ENCODE measurements at regions of chr1 and their contacts with region 1.

Region 1: GRCh38 chr1:115062542-115063011 is 26.7 kb downstream of the TSPAN2 start:
- DNase-seq: peak; percentile 95
- H3K4me3 Mint-ChIP-seq: no peak overlapping the region
- H3K27ac Mint-ChIP-seq: peak overlapping the region; percentile 80
- H3K4me1 Mint-ChIP-seq: peaks cover 43% of the 10 kb centered on the region
- H3K27me3 Mint-ChIP-seq: no peaks in the 10 kb centered on the region

Region 2: DNA sequence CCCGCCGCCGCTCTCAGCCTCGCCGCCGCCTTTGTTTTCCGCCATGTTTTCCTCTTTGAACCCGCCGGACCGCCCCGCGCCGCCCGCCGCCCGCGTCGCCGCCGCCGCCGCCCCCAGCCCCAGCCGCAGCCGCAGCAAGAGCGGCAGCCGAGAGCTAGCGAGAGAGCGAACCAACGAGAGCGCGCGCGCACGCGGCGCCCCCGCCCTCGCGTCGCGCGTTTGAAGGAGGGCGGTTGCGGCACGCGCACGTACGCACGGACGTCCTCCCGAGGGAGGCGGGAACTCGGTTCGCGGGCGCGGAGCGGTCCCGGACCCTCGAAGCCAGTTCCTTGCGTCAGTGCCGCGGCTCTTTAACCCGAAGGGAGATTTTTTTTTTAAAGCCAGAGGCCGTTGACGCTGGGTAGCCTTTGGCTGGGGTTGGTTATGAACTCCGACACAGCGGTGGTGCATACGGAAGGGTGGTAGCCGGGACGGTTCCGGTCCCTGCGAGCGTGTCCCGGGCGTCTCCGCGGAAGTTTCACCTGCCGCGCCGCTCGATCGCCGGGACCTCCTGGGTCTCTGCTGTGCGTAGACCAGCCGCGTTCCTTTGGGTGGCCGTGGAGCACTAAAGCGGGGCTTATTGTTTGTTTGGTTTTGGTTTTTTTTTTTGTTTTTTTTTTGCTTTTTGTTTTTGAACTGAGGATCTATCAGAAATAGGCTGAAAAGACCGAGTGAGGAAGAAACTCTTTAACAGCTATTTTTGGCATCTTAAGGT is 551.4 kb before region 1 on chr1 and contains the start of gene TRIM33:
- CTCF ChIA-PET with region 1: no interaction called
- POLR2A ChIA-PET with region 1: no interaction called
- intact Hi-C with region 1: loop called (anchors 1 kb)
- DNase-seq: peak; percentile 95
- H3K4me3 Mint-ChIP-seq: peak within 1 kb of the TSS; percentile 91
- H3K27ac Mint-ChIP-seq: peak within 1 kb of the TSS; percentile 98
- H3K4me1 Mint-ChIP-seq: peaks cover 41% of the 10 kb centered on the region
- H3K27me3 Mint-ChIP-seq: no peaks in the 10 kb centered on the region
- total RNA-seq, gene TRIM33: 26.9 to 27.9 TPM

Region 3: GRCh38 chr1:114670083-114671010 is 392.2 kb before region 1 on chr1:
- CTCF ChIA-PET with region 1: no interaction called
- POLR2A ChIA-PET with region 1: no interaction called
- intact Hi-C with region 1: loop called (anchors 5 kb)
- DNase-seq: peak; percentile 92
- H3K4me3 Mint-ChIP-seq: peak overlapping the region; percentile 88
- H3K27ac Mint-ChIP-seq: no peak overlapping the region
- H3K4me1 Mint-ChIP-seq: peaks cover 7% of the 10 kb centered on the region
- H3K27me3 Mint-ChIP-seq: peaks cover 2% of the 10 kb centered on the region

Region 4: GRCh38 chr1:115052454-115053083 is 10.0 kb before region 1 on chr1:
- CTCF ChIA-PET with region 1: interaction called, 10 read pairs
- POLR2A ChIA-PET with region 1: no interaction called
- intact Hi-C with region 1: no loop called
- DNase-seq: peak; percentile 67
- H3K4me3 Mint-ChIP-seq: no peak overlapping the region
- H3K27ac Mint-ChIP-seq: no peak overlapping the region
- H3K4me1 Mint-ChIP-seq: peaks cover 3% of the 10 kb centered on the region
- H3K27me3 Mint-ChIP-seq: no peaks in the 10 kb centered on the region

Region 5: DNA sequence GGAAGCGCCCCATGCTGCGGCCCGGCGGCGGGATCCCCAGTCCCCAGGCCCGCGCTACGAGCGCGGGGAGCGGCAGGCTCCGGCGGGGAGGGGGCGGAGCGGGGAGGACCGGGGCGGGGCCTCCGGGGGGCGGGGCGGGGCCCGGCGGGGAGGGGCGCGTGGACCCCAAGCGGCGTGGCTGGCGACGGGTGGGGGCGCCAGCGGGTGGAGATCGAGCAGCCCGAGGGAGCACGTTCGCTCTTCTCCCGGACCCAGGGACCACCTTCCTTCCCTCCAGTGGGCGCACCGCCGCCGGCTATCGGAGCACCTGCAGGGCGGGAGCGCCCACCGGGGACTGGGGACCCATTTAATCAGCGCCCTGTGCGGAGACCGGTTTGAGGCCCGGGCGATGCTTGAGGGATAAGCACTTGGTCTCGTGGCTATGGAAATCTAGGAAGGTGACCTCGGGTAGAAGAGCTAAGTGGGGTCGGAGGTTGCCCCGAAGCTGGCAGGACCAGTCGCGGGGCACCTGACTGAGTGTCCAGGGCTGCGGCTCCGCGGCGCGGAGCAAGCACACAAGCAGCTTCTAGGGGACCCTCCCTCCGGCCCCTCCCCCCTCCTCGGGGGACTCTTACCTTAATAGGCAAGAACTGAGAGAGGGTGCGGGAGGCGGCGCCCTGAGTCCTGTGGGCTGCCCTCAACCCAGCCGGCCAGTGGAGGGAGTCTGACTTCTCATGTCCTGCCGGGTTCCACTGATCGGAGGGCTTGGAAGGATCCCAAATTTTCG is 27.0 kb after region 1 on chr1 and contains the start of gene TSPAN2:
- CTCF ChIA-PET with region 1: no interaction called
- POLR2A ChIA-PET with region 1: no interaction called
- intact Hi-C with region 1: loop called (anchors 2 kb)
- DNase-seq: peak; percentile 56
- H3K4me3 Mint-ChIP-seq: peak within 1 kb of the TSS; percentile 78
- H3K27ac Mint-ChIP-seq: no peak within 1 kb of the TSS
- H3K4me1 Mint-ChIP-seq: peaks cover 43% of the 10 kb centered on the region
- H3K27me3 Mint-ChIP-seq: no peaks in the 10 kb centered on the region
- total RNA-seq, gene TSPAN2: 2.5 to 2.7 TPM

Region 6: GRCh38 chr1:115098979-115099692 is 36.6 kb after region 1 on chr1:
- CTCF ChIA-PET with region 1: interaction called, 5 read pairs
- POLR2A ChIA-PET with region 1: no interaction called
- intact Hi-C with region 1: loop called (anchors 1 kb)
- DNase-seq: peak; percentile 78
- H3K4me3 Mint-ChIP-seq: peak overlapping the region; percentile 80
- H3K27ac Mint-ChIP-seq: peak overlapping the region; percentile 85
- H3K4me1 Mint-ChIP-seq: peaks cover 47% of the 10 kb centered on the region
- H3K27me3 Mint-ChIP-seq: no peaks in the 10 kb centered on the region

Region 7: GRCh38 chr1:115648717-115649691 is 586.4 kb after region 1 on chr1:
- CTCF ChIA-PET with region 1: no interaction called
- POLR2A ChIA-PET with region 1: no interaction called
- intact Hi-C with region 1: loop called (anchors 5 kb)
- DNase-seq: peak; percentile 52
- H3K4me3 Mint-ChIP-seq: no peak overlapping the region
- H3K27ac Mint-ChIP-seq: no peak overlapping the region
- H3K4me1 Mint-ChIP-seq: no peaks in the 10 kb centered on the region
- H3K27me3 Mint-ChIP-seq: peaks cover 8% of the 10 kb centered on the region